ENCODE measurements at regions of chr22 and their contacts with region 1.

Region 1: GRCh38 chr22:36211237-36211861 is 9.7 kb upstream of the APOL4 start:
- H3K4me3 ChIP-seq: no peak overlapping the region
- H3K27ac ChIP-seq: no peak overlapping the region
- H3K4me1 ChIP-seq: no peaks in the 10 kb centered on the region
- CTCF ChIP-seq: no peak

Region 2: GRCh38 chr22:36160499-36160942 is 50.8 kb before region 1 on chr22 and contains the start of gene APOL3:
- CTCF ChIA-PET with region 1: interaction called, 12 read pairs
- POLR2A ChIA-PET with region 1: no interaction called
- H3K4me3 ChIP-seq: no peak within 1 kb of the TSS
- H3K27ac ChIP-seq: no peak within 1 kb of the TSS
- H3K4me1 ChIP-seq: no peaks in the 10 kb centered on the region
- CTCF ChIP-seq: no peak

Region 3: GRCh38 chr22:36232715-36233401 is 21.5 kb after region 1 on chr22:
- CTCF ChIA-PET with region 1: no interaction called
- POLR2A ChIA-PET with region 1: no interaction called
- H3K4me3 ChIP-seq: no peak overlapping the region
- H3K27ac ChIP-seq: no peak overlapping the region
- H3K4me1 ChIP-seq: no peaks in the 10 kb centered on the region
- CTCF ChIP-seq: no peak

Region 4: GRCh38 chr22:36252754-36253517 is 41.6 kb after region 1 on chr22 and contains the start of gene APOL1:
- CTCF ChIA-PET with region 1: no interaction called
- POLR2A ChIA-PET with region 1: no interaction called
- H3K4me3 ChIP-seq: no peak within 1 kb of the TSS
- H3K27ac ChIP-seq: no peak within 1 kb of the TSS
- H3K4me1 ChIP-seq: no peaks in the 10 kb centered on the region
- CTCF ChIP-seq: no peak

Region 5: GRCh38 chr22:36286471-36287224 is 75.3 kb after region 1 on chr22:
- CTCF ChIA-PET with region 1: no interaction called
- POLR2A ChIA-PET with region 1: no interaction called
- H3K4me3 ChIP-seq: no peak overlapping the region
- H3K27ac ChIP-seq: no peak overlapping the region
- H3K4me1 ChIP-seq: no peaks in the 10 kb centered on the region
- CTCF ChIP-seq: peak; percentile 93